ENCODE measurements at regions of chr7 and their contacts with region 1.

Region 1: DNA sequence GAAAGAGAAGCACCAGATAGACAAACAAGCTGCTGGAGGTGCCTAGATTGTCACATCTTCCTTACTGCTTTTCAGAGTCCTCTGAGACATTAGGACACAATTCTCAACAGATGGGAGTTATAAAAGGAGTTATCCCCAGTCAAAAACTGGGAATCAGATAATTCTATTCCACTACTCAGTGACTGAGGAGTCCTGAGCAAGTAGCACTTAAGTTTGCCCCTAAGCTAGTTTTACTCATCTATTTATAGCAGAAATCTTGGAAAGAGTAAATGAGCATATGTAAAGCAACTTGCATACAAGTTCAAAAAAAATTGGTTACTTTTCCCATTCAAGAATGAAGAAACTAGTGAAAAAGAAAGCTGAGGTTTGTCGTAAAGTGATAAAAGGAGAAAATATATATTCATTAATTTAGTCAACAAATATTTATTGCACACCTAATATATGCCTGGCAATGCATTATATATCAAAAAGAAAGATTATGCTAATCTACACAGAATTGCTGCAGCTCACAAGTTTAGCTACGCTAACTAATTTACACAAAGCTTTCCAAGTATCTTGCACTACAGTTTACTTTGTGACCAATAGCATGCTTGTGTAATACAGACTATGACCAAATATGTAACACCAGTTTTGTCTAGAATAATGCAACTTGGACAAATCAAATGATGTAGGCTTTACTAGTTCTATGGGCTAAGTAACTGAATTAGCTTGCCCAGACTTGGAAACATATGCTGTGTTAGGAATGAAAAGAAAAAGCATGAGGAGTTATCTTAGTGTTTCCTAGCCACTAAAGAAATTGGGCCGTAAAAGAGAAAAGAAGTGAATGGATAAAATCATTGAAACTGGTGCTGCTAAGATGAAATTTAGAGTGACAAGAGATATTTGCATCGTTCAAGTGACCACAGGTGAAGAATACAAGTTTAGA is 106.3 kb downstream of the GRM3 start:
- DNase-seq: no peak
- H3K4me3 ChIP-seq: no peak overlapping the region
- H3K27ac ChIP-seq: no peak overlapping the region
- H3K4me1 ChIP-seq: no peaks in the 10 kb centered on the region
- H3K27me3 ChIP-seq: no peaks in the 10 kb centered on the region
- CTCF ChIP-seq: no peak
- POLR2A ChIP-seq: no peak

Region 2: DNA sequence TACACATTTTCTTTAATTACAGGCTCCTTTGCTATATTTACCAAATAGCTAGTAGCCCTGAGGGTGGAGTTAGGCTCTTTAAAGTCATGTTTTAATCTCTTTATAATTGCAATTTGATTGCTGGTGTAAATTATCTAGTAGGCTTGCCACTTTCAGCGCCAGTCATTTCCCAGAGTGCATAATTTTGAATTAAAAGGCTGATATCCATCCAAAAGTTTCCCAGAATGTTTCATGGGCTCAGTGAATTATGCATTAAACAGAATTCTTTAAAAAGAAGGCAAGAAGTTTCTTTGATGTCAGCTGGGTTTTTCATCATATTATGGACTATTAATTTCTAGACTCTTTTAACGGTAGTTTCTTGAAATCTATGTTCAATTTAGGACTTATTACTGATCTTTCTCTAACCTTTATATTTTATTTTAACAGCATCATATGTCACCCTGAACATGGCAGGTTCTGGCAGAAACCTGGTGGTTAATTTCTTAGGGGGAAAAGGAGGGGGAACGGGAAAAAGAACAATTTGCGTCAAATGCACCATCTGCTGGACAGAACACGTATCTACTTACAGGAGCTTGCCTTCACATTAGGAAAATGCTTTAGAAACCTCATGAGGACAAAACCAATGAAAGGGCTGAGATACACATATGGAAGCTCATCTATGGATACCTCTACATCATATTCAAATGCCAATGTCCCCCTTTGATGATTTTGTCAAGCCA is 64.8 kb after region 1 on chr7:
- intact Hi-C with region 1: loop called (anchors 10 kb)
- DNase-seq: no peak
- H3K4me3 ChIP-seq: no peak overlapping the region
- H3K27ac ChIP-seq: no peak overlapping the region
- H3K4me1 ChIP-seq: no peaks in the 10 kb centered on the region
- H3K27me3 ChIP-seq: peaks cover 0 to 4% (median 0%) of the 10 kb centered on the region in 7 donors
- CTCF ChIP-seq: peak in 2 of 11 experiments; percentile 27 to 28
- POLR2A ChIP-seq: no peak